Activated CD8-positive, alpha-beta T cell treated with anti-CD3 and anti-CD28 coated beads, Interleukin-2, amount 10 ng/mL, durations not matched to agents 7 days and 5 days (primary cell): ENCODE measurements at regions of chr1 and their contacts with region 1.

Region 1: GRCh38 chr1:211654838-211655787 is 20.3 kb downstream of the NEK2 start:
- DNase-seq: peak; percentile 88
- ATAC-seq: peak; percentile 97
- H3K4me3 Mint-ChIP-seq: no peak overlapping the region
- H3K27ac Mint-ChIP-seq: no peak overlapping the region
- H3K4me1 Mint-ChIP-seq: peaks cover 4% of the 10 kb centered on the region
- H3K27me3 Mint-ChIP-seq: peaks cover 12% of the 10 kb centered on the region

Region 2: DNA sequence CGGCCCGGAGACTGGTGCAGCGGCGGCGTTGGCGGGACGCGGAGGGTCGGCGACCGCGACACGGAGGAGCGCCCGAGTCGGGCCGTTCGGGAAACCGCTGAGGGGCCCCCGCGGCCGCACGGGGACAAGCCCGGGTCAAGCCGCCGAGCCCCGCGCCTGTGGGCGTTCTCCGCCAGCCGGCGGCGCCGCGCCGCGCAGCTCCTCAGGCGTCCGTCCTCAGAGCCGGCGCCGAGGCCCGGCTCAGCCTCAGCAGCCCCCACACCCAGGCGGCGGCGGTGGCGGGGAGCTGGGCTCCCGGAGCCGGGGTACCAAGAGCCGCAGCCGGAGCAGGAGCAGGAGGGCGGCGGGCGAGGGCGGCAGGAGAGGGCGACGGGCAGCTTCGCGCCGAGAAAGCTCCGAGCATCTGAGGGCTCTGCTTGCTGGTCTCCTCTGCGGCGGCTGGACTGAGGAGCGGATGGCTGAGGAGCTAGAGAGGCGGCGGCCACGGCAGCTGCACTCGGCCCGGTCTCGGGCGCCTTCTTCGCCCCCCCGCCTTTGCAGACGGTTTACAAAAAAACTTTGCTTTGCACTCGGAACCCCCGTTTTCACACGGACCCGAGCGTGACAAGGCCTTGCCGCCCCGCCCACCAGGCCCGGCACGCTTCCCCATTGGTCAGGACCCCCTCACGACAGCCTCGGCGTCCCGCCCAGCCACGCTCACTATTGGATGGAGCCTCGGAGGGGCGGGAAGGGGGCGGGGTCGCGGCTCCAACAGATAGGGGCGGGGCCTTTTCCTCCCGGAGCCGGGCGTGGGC is 76.3 kb before region 1 on chr1 and contains the start of gene SLC30A1:
- CTCF ChIA-PET with region 1: interaction called, 17 read pairs
- POLR2A ChIA-PET with region 1: interaction called, 3 read pairs
- DNase-seq: peak; percentile 100
- ATAC-seq: peak; percentile 90
- H3K4me3 Mint-ChIP-seq: peak within 1 kb of the TSS; percentile 97
- H3K27ac Mint-ChIP-seq: peak within 1 kb of the TSS; percentile 92
- H3K4me1 Mint-ChIP-seq: peaks cover 59% of the 10 kb centered on the region
- H3K27me3 Mint-ChIP-seq: peaks cover under 1% of the 10 kb centered on the region
- total RNA-seq, gene SLC30A1: 14.5 to 15.6 TPM

Region 3: GRCh38 chr1:211643324-211644212 is 11.5 kb before region 1 on chr1:
- CTCF ChIA-PET with region 1: interaction called, 18 read pairs
- POLR2A ChIA-PET with region 1: no interaction called
- DNase-seq: peak; percentile 42
- ATAC-seq: peak; percentile 58
- H3K4me3 Mint-ChIP-seq: peak overlapping the region; percentile 22
- H3K27ac Mint-ChIP-seq: peak overlapping the region; percentile 46
- H3K4me1 Mint-ChIP-seq: peaks cover 11% of the 10 kb centered on the region
- H3K27me3 Mint-ChIP-seq: peaks cover 18% of the 10 kb centered on the region

Region 4: DNA sequence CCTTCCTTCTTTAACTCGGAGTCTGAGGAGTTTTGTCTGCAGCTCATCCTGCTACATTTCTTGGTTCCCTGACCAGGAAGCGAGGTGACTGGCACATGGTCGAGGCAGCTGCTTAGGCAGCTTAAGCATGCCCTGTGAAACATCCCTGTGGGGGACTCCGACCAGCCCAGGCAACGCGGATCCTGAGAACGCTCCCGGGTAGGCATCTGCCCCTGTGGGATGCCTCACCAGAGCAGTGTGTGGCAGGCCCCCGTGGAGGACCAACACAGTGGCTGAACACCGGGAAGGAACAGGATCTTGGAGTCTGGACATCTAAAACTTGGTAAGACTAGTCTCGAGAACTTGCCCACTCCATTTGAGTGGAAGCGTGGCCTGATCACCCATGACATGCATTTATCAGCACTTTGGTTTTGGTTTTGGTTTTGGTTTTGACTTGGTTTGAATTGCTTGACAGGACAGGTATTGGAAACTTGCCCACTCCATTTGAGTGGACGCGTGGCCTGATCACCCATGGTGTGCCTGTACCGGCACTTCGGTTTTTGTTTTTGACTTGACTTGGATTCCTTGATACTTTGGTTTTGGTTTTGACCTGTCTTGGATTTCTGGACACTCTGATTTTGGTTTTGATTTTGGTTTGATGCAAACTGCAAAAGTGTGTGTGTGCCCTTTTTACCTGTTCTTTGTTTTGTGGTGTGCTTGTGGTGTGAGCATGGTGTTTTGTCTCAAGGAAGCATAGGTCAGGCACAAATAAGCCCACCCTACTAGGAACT is 32.5 kb after region 1 on chr1:
- CTCF ChIA-PET with region 1: no interaction called
- POLR2A ChIA-PET with region 1: no interaction called
- DNase-seq: no peak
- ATAC-seq: no peak
- H3K4me3 Mint-ChIP-seq: peak overlapping the region; percentile 12
- H3K27ac Mint-ChIP-seq: peak overlapping the region; percentile 31
- H3K4me1 Mint-ChIP-seq: peaks cover 21% of the 10 kb centered on the region
- H3K27me3 Mint-ChIP-seq: peaks cover 8% of the 10 kb centered on the region

Region 5: GRCh38 chr1:211703812-211704537 is 48.9 kb after region 1 on chr1:
- CTCF ChIA-PET with region 1: no interaction called
- POLR2A ChIA-PET with region 1: no interaction called
- DNase-seq: no peak
- ATAC-seq: no peak
- H3K4me3 Mint-ChIP-seq: no peak overlapping the region
- H3K27ac Mint-ChIP-seq: no peak overlapping the region
- H3K4me1 Mint-ChIP-seq: peaks cover under 1% of the 10 kb centered on the region
- H3K27me3 Mint-ChIP-seq: peaks cover 3% of the 10 kb centered on the region

Region 6: GRCh38 chr1:211781260-211781659 is 126.1 kb after region 1 on chr1:
- CTCF ChIA-PET with region 1: no interaction called
- POLR2A ChIA-PET with region 1: no interaction called
- DNase-seq: no peak
- ATAC-seq: no peak
- H3K4me3 Mint-ChIP-seq: no peak overlapping the region
- H3K27ac Mint-ChIP-seq: no peak overlapping the region
- H3K4me1 Mint-ChIP-seq: peaks cover 11% of the 10 kb centered on the region
- H3K27me3 Mint-ChIP-seq: no peaks in the 10 kb centered on the region

Region 7: GRCh38 chr1:211813590-211813989 is 158.5 kb after region 1 on chr1:
- CTCF ChIA-PET with region 1: no interaction called
- POLR2A ChIA-PET with region 1: no interaction called
- DNase-seq: no peak
- ATAC-seq: no peak
- H3K4me3 Mint-ChIP-seq: no peak overlapping the region
- H3K27ac Mint-ChIP-seq: no peak overlapping the region
- H3K4me1 Mint-ChIP-seq: no peaks in the 10 kb centered on the region
- H3K27me3 Mint-ChIP-seq: no peaks in the 10 kb centered on the region